PC-3 (cell line): ENCODE measurements at regions of chr1 and their contacts with region 1.

Region 1: DNA sequence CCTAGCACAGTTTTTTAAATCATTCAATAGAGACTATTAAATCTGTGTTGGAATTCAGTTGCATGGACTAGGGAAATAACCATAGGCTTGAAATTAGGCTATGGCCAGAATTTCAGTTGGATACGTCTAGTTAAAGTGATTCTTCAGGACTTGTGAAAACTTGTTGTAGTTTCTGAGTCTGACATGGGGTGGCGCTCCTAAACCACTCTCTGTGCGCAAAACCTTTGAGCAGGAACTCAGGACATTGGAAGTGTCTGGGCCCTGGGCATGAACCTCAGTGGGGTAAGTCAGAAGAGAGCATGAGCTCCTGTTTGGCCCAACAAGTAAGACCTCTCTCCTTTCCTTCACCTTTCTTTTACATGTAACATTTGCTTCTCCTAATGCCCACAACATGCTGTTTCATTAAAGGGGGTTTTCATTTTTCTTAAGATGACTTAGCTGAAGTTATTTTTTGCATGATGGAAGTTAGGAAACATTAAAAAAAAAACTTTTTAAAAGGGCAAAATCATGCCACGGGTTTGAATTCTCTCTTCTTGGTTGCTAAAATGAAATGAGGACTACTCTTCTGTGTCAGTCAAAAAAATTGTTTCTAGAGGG is 17.1 kb upstream of the CCDC190 start:
- DNase-seq: peak; percentile 93
- ATAC-seq: peak; percentile 23
- H3K4me3 ChIP-seq: no peak overlapping the region
- H3K27ac ChIP-seq: no peak overlapping the region
- H3K4me1 ChIP-seq: peaks cover 23% of the 10 kb centered on the region
- H3K27me3 ChIP-seq: no peaks in the 10 kb centered on the region
- CTCF ChIP-seq: peak; percentile 98

Region 2: GRCh38 chr1:162779043-162779442 is 99.1 kb before region 1 on chr1:
- CTCF ChIA-PET with region 1: no interaction called
- POLR2A ChIA-PET with region 1: no interaction called
- intact Hi-C with region 1: no loop called
- DNase-seq: no peak
- ATAC-seq: no peak
- H3K4me3 ChIP-seq: no peak overlapping the region
- H3K27ac ChIP-seq: no peak overlapping the region
- H3K4me1 ChIP-seq: no peaks in the 10 kb centered on the region
- H3K27me3 ChIP-seq: no peaks in the 10 kb centered on the region
- CTCF ChIP-seq: no peak

Region 3: GRCh38 chr1:162847839-162848453 is 30.2 kb before region 1 on chr1:
- CTCF ChIA-PET with region 1: interaction called, 18 read pairs
- POLR2A ChIA-PET with region 1: interaction called, 4 read pairs
- intact Hi-C with region 1: loop called (anchors 1 kb)
- DNase-seq: peak; percentile 90
- ATAC-seq: peak; percentile 48
- H3K4me3 ChIP-seq: no peak overlapping the region
- H3K27ac ChIP-seq: no peak overlapping the region
- H3K4me1 ChIP-seq: peaks cover 15% of the 10 kb centered on the region
- H3K27me3 ChIP-seq: no peaks in the 10 kb centered on the region
- CTCF ChIP-seq: peak; percentile 99

Region 4: DNA sequence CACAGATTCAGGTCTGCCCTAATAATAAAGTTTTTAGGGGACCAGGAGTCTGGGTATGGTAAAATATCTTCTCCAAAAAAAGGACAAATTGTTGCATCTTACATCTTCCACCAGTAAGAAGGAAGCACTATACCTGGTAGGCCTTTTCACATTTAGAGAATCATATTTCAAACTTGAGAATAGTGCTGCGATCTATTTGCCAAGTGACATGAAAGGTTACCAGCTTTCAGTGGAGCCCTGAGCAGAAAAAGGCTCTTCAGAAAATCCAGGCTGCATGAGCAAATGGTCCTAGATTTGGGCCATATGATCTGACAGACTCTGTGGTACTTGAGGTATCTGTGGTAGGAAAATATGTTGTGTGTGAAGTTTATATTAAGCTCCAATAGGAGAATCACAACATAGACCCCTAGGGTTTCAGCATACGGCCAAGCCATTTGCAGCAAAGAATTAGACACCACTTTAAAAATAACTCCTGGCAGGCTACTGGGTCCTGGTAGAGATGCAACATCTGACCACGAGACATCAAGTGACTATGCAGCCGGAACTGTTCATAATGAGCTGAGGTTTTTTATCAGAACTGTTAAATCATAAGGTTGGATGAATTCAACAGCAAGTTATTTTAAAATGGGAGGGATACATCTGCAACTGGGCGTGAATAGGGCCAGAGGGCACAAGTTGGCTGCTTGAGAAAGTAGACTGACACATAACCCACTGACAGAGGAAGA is 21.5 kb after region 1 on chr1:
- CTCF ChIA-PET with region 1: interaction called, 6 read pairs
- POLR2A ChIA-PET with region 1: no interaction called
- intact Hi-C with region 1: loop called (anchors 2 kb)
- DNase-seq: peak; percentile 85
- ATAC-seq: peak; percentile 87
- H3K4me3 ChIP-seq: no peak overlapping the region
- H3K27ac ChIP-seq: peak overlapping the region; percentile 79
- H3K4me1 ChIP-seq: peaks cover 24% of the 10 kb centered on the region
- H3K27me3 ChIP-seq: no peaks in the 10 kb centered on the region
- CTCF ChIP-seq: no peak

Region 5: DNA sequence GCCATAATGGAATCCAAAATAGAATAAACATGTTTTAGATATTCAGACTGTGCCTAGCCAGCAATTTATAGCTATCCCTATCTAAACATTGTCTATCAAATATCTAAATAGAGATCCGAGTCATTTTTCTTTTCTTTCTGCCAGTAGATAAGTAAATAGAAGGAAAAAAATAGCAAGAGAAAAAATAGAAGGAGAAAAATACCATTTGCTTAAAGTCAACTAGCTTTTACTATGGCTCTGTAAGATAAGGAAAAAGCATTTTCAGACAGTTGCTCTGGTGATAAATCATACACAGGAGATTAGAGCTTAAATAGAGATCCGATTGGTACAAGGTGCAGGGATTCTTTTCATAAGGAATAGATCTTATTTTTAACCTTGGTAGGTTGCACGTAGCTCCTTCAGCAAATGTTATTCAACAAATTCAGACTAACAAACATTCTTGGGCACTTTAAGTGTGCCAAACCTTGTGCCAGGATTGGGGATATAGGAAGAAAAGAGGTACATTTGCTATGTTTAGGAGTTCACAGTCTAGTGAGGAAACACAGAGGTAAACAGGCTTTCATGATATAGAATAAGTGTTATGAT is 53.0 kb after region 1 on chr1:
- CTCF ChIA-PET with region 1: interaction called, 6 read pairs
- POLR2A ChIA-PET with region 1: no interaction called
- intact Hi-C with region 1: loop called (anchors 2 kb)
- DNase-seq: no peak
- ATAC-seq: no peak
- H3K4me3 ChIP-seq: no peak overlapping the region
- H3K27ac ChIP-seq: no peak overlapping the region
- H3K4me1 ChIP-seq: no peaks in the 10 kb centered on the region
- H3K27me3 ChIP-seq: no peaks in the 10 kb centered on the region
- CTCF ChIP-seq: no peak

Region 6: GRCh38 chr1:163071405-163072255 is 193.5 kb after region 1 on chr1:
- CTCF ChIA-PET with region 1: interaction called, 25 read pairs
- POLR2A ChIA-PET with region 1: interaction called, 3 read pairs
- intact Hi-C with region 1: loop called (anchors 1 kb)
- DNase-seq: peak; percentile 97
- ATAC-seq: peak; percentile 68
- H3K4me3 ChIP-seq: no peak overlapping the region
- H3K27ac ChIP-seq: peak overlapping the region; percentile 79
- H3K4me1 ChIP-seq: peaks cover 30% of the 10 kb centered on the region
- H3K27me3 ChIP-seq: no peaks in the 10 kb centered on the region
- CTCF ChIP-seq: peak; percentile 87

Region 7: DNA sequence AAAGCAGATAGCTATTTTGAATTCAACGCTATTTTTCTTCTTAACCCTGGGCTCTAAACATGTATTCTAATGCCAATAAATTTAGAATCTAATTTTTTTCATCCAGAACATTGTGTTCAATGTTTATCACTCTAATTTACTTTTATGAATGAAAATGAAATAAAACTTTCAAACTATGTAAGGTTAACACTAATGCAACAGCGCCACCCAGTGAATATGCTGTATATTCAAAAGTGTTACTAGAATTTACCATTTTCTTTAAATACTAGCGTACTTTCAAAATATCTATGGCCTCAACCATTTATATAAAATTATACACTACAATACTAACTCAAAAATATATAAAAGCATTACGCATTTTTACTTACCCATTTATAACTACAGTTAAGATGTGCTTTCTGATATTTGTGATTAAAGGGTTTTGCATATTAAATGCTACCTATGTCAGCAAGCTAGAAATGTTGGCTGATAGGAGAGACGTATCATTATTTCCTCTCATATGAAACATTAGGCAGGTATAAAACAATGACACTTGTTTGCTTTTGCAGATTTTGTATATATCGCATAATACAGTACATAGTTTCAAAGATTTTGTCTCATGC is 437.8 kb after region 1 on chr1:
- CTCF ChIA-PET with region 1: interaction called, 4 read pairs
- POLR2A ChIA-PET with region 1: no interaction called
- intact Hi-C with region 1: loop called (anchors 1 kb)
- DNase-seq: peak; percentile 68
- ATAC-seq: peak; percentile 37; the same call in 1 of the 2 replicates
- H3K4me3 ChIP-seq: no peak overlapping the region
- H3K27ac ChIP-seq: no peak overlapping the region
- H3K4me1 ChIP-seq: peaks cover 8% of the 10 kb centered on the region; the same call in 1 of the 2 replicates
- H3K27me3 ChIP-seq: no peaks in the 10 kb centered on the region
- CTCF ChIP-seq: peak; percentile 95